PC-9 (cell line): ENCODE measurements at regions of chr3 and their contacts with region 1.

Region 1: GRCh38 chr3:174955513-174956001 is 96.4 kb downstream of the NAALADL2 start:
- DNase-seq: peak; percentile 58 to 90
- H3K4me3 ChIP-seq: no peak overlapping the region
- H3K27ac ChIP-seq: 0 out of 2 replicates have a peak overlapping the region, but pooled peaks have one; percentile 3
- H3K4me1 ChIP-seq: peaks cover 25% of the 10 kb centered on the region
- H3K27me3 ChIP-seq: no peaks in the 10 kb centered on the region
- CTCF ChIP-seq: no peak

Region 2: DNA sequence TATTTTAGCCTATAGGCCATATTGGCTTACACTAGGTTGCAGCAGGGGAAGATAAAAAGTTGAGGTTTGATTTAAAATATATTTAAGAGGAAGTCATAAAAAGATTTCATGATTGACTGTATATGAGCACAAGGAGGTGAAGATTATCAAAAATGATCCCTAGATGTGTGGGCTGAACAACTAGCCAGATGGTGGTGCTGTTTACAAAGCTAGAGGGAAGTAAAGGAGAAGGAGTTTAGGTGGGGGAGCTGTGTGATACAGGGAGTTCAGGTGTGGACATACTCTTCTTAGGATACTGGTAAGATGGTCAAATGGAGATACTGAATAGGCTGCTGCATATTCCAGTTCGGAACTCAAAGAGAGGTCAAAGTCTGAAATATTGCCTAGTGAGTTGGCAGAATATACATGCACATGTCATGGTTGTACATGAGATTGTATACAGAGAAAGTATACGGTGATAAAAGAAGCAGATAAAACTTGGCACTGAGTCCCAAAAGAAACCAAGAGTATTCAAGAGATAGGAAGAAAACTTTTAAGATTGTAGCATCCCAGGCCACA is 830.2 kb before region 1 on chr3:
- CTCF ChIA-PET with region 1: no interaction called
- POLR2A ChIA-PET with region 1: no interaction called
- intact Hi-C with region 1: loop called (anchors 10 kb)
- DNase-seq: peak in 1 of 2 experiments; percentile 8
- H3K4me3 ChIP-seq: no peak overlapping the region
- H3K27ac ChIP-seq: no peak overlapping the region
- H3K4me1 ChIP-seq: peaks cover 13% of the 10 kb centered on the region
- H3K27me3 ChIP-seq: no peaks in the 10 kb centered on the region
- CTCF ChIP-seq: peak; percentile 55; the same call in 1 of the 2 replicates

Region 3: DNA sequence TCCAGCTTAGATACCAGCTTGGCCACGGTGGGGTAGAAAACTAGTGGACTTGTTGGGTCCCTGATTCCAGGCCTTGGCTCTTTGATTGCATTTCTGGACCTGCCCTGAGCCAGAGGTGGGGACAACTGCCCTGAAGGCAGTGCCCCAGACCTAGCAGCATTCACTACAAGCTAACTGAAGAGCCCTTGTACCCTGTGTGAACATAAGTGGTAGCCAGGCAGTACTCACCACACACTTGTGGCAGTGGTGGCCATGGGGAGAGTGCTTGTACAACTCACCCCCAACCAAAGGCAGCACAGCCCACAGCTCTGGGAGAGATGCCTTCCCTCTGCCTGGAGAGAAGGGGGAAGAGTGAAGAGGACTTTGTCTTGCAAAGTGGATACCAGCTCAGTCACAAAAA is 273.8 kb before region 1 on chr3:
- CTCF ChIA-PET with region 1: no interaction called
- POLR2A ChIA-PET with region 1: no interaction called
- intact Hi-C with region 1: no loop called
- DNase-seq: no peak
- H3K4me3 ChIP-seq: no peak overlapping the region
- H3K27ac ChIP-seq: no peak overlapping the region
- H3K4me1 ChIP-seq: no peaks in the 10 kb centered on the region
- H3K27me3 ChIP-seq: no peaks in the 10 kb centered on the region
- CTCF ChIP-seq: no peak

Region 4: GRCh38 chr3:174973468-174973867 is 17.9 kb after region 1 on chr3:
- CTCF ChIA-PET with region 1: no interaction called
- POLR2A ChIA-PET with region 1: no interaction called
- intact Hi-C with region 1: loop called (anchors 2 kb)
- DNase-seq: peak; percentile 41 to 67
- H3K4me3 ChIP-seq: no peak overlapping the region
- H3K27ac ChIP-seq: no peak overlapping the region
- H3K4me1 ChIP-seq: peaks cover 7% of the 10 kb centered on the region; the same call in 1 of the 2 replicates
- H3K27me3 ChIP-seq: no peaks in the 10 kb centered on the region
- CTCF ChIP-seq: no peak

Region 5: GRCh38 chr3:175743733-175744400 is 788.3 kb after region 1 on chr3:
- CTCF ChIA-PET with region 1: no interaction called
- POLR2A ChIA-PET with region 1: no interaction called
- intact Hi-C with region 1: loop called (anchors 10 kb)
- DNase-seq: peak; percentile 18 to 64
- H3K4me3 ChIP-seq: no peak overlapping the region
- H3K27ac ChIP-seq: no peak overlapping the region
- H3K4me1 ChIP-seq: peaks cover 28% of the 10 kb centered on the region
- H3K27me3 ChIP-seq: no peaks in the 10 kb centered on the region
- CTCF ChIP-seq: no peak